ENCODE measurements at regions of chr7 and their contacts with region 1.

Region 1: DNA sequence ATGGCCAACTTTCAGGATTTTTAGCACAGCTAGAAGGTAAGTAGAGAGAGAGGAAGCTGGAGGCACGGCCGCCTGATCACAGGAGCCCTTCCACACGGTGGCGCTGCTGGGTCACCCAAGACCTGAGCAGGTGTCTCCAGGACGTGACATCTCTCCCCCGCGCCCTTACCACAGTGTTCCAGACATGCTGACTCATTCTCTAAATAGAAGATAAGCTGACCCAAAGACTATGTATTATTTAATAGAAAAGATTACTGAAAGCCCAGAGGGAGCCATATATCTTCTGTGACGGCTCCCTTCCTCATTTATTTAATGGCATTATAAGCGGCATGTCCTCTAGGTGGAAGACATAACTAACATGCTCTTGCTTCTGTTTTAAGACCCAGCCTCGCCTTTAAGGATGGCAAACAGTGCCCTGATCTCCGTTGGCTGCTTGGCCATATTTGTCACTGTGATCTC is 26.0 kb upstream of the MALSU1 start:
- DNase-seq: peak; percentile 42
- H3K4me3 ChIP-seq: no peak overlapping the region
- CTCF ChIP-seq: peak; percentile 91

Region 2: DNA sequence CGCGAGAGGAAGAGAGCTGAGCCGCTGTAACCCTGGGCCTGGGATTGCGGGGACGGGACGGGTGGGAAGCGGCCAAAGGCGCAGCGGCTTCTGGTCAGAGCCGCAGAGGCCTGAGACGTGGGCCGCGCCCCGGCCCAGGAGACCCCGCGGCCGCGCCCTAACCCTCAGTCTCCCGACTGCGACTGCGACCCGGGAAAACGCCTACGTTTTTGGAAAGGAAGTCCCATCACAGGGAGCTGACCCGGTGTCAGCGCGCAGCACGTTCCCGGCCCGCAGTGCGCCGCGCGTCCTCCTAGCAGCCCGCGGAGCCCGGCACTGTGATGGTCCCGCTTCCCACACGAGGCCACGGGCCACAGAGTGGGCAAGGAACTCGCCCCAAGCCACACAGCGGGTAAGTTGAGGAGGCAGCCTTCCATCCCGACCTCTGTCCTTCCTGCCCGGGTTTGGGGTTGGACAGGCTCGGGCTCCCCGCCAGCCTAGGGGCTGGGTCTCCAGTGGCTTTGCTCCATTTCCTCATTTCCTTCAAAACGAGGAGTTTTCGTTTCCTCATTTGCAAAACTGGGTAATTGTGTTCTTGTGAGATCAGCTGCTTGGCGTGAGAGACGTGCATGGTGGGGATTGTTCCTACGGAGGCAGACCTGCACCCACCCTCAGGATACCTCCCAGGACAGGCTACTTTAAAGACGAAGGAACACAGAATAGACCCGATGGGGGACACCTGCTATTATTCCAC is 25.4 kb before region 1 on chr7:
- CTCF ChIA-PET with region 1: interaction called, 14 read pairs
- POLR2A ChIA-PET with region 1: no interaction called
- DNase-seq: no peak
- H3K4me3 ChIP-seq: peak overlapping the region; percentile 57
- CTCF ChIP-seq: no peak

Region 3: GRCh38 chr7:23291957-23292560 is 18.9 kb after region 1 on chr7:
- CTCF ChIA-PET with region 1: interaction called, 34 read pairs
- POLR2A ChIA-PET with region 1: no interaction called
- DNase-seq: no peak
- H3K4me3 ChIP-seq: no peak overlapping the region
- CTCF ChIP-seq: no peak

Region 4: DNA sequence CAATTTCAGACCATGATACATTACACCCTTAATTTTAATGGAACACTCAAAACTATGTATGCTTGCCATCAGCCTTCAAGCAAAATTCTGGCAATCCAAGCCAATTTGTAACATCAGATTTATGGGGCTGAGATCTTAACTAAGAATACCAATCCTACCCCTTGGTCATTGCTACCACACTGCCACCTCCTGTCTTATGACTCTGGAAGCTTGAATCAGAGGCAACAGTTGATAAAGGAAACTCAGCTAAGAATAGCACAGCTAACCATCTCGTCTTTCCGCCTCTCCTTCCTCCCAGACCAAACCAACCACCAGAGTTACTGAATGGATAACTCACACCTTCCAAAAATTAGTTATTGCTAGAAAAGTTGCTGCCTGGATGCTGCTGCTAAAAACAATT is 189.7 kb after region 1 on chr7:
- CTCF ChIA-PET with region 1: interaction called, 15 read pairs
- POLR2A ChIA-PET with region 1: no interaction called
- DNase-seq: no peak
- H3K4me3 ChIP-seq: no peak overlapping the region
- CTCF ChIP-seq: peak; percentile 37

Region 5: DNA sequence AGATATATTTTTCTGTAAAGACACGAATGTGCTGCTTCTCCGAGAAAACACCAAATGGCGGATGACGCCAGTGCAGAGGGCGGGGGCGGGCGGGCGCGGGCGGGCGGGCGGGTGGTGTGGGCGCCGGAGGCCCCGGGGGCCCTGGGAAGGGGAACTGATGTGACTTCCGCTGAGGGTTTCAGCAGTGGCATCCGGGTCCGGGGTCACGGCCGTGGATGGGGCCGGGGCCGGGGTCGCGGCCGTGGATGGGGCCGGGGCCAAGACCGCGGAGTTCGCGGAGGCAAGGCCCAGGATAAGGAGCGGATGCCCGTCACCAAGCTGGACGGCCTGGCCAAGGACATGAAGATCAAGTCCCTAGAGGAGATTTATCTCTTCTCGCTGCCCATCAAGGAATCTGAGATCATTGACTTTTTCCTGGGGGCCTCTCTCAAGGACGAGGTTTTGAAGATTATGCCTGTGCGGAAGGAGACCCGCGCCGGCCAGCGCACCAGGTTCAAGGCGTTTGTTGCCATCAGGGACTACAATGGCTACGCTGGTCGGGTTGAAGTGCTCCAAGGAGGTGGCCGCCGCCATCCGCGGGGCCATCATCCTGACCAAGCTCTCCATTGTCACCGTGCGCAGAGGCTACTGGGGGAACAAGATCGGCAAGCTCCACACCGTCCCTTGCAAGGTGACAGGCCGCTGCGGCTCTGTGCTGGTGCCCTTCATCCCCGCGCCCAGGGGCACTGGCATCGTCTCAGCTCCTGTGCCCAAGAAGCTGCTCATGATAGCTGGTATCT is 217.4 kb after region 1 on chr7:
- CTCF ChIA-PET with region 1: interaction called, 10 read pairs
- POLR2A ChIA-PET with region 1: no interaction called
- DNase-seq: no peak
- H3K4me3 ChIP-seq: peak overlapping the region; percentile 51
- CTCF ChIP-seq: no peak

Region 6: GRCh38 chr7:23539494-23539907 is 266.3 kb after region 1 on chr7:
- CTCF ChIA-PET with region 1: interaction called, 46 read pairs
- POLR2A ChIA-PET with region 1: no interaction called
- DNase-seq: no peak
- H3K4me3 ChIP-seq: no peak overlapping the region
- CTCF ChIP-seq: no peak

Measured in AG04449 (cell line).